ENCODE measurements at regions of chr9 and their contacts with region 1.

Region 1: DNA sequence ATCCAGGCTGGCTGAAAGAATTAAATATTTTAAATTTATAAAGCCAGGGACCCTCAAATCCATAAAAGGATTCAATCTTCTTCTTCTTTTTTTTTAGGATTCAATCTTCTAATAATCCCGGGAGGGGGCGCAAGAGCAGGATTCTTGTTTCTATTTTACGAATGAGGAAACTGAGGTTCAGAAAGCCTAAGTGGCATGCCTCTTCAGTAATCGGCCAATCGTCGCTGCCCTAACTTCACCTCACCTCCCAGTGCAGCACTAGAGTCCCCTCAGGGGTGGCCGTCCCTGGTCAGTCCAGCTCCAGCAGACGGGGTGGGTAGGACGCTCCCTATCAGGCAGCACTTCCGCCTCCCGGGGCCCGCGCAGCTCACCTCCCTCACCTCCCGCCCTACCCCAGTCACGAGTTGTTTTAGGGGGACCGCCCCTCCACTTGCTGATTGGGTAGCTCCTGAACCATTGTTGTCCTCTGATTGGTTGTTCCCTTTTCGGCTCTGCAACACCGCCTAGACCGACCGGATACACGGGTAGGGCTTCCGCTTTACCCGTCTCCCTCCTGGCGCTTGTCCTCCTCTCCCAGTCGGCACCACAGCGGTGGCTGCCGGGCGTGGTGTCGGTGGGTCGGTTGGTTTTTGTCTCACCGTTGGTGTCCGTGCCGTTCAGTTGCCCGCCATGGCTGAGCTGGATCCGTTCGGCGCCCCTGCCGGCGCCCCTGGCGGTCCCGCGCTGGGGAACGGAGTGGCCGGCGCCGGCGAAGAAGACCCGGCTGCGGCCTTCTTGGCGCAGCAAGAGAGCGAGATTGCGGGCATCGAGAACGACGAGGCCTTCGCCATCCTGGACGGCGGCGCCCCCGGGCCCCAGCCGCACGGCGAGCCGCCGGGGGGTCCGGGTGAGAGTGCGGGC is at the start of gene CLTA:
- DNase-seq: peak; percentile 99
- H3K4me3 ChIP-seq: peak within 1 kb of the TSS; percentile 82 to 95 (median 92)
- H3K27ac ChIP-seq: peak within 1 kb of the TSS; percentile 91 to 94 (median 92)
- H3K4me1 ChIP-seq: peaks cover 36 to 51% (median 47%) of the 10 kb centered on the region in 4 donors
- H3K27me3 ChIP-seq: no peaks in the 10 kb centered on the region
- CTCF ChIP-seq: peak; percentile 52 to 61 (median 56)
- EP300 ChIP-seq: no peak
- POLR2A ChIP-seq: peak; percentile 65
- total RNA-seq, gene CLTA: 125 to 178 (median 159) TPM

Region 2: GRCh38 chr9:36258208-36258988 is 67.8 kb after region 1 on chr9 and contains the start of gene GNE:
- intact Hi-C with region 1: loop called (anchors 10 kb)
- DNase-seq: peak; percentile 99
- H3K4me3 ChIP-seq: peak within 1 kb of the TSS; percentile 80 to 97 (median 89)
- H3K27ac ChIP-seq: peak within 1 kb of the TSS; percentile 97 to 100 (median 98)
- H3K4me1 ChIP-seq: peaks cover 12 to 34% (median 23%) of the 10 kb centered on the region in 4 donors
- H3K27me3 ChIP-seq: no peaks in the 10 kb centered on the region
- CTCF ChIP-seq: no peak
- EP300 ChIP-seq: peak; percentile 13
- POLR2A ChIP-seq: peak; percentile 82
- total RNA-seq, gene GNE: 25.3 to 35.6 (median 29.9) TPM

Region 3: GRCh38 chr9:36328798-36329411 is 138.3 kb after region 1 on chr9:
- intact Hi-C with region 1: loop called (anchors 5 kb)
- DNase-seq: no peak
- H3K4me3 ChIP-seq: no peak overlapping the region
- H3K27ac ChIP-seq: no peak overlapping the region
- H3K4me1 ChIP-seq: peaks cover 0 to 24% (median 13%) of the 10 kb centered on the region in 4 donors
- H3K27me3 ChIP-seq: no peaks in the 10 kb centered on the region
- CTCF ChIP-seq: peak; percentile 72 to 81 (median 81)
- EP300 ChIP-seq: no peak
- POLR2A ChIP-seq: no peak

Region 4: DNA sequence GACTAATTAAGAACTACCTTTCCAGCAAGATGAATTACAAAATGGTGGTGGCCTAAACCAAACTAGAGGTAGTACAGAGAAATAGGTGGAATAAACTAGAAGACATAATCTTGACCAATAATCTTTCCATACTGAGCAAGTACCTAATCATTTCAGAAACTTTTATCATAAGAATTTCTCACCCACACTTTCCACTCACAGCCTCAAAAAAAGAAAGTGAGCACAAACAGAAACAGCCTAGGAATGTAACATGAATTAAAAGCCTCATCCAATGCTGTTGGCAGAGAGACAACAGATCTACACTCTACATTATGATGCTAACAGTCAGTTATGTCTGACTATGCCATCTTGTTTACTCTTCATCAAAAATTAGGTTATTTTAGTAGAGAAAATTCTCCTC is 208.1 kb after region 1 on chr9:
- intact Hi-C with region 1: no loop called
- DNase-seq: no peak
- H3K4me3 ChIP-seq: no peak overlapping the region
- H3K27ac ChIP-seq: peak overlapping the region; percentile 13 to 98 (median 93)
- H3K4me1 ChIP-seq: peaks cover 26 to 68% (median 53%) of the 10 kb centered on the region in 4 donors
- H3K27me3 ChIP-seq: no peaks in the 10 kb centered on the region
- CTCF ChIP-seq: no peak
- EP300 ChIP-seq: no peak
- POLR2A ChIP-seq: no peak

Measured in esophagus muscularis mucosa (tissue), 4 donors.